ENCODE measurements at regions of chr19 and their contacts with region 1.

Region 1: DNA sequence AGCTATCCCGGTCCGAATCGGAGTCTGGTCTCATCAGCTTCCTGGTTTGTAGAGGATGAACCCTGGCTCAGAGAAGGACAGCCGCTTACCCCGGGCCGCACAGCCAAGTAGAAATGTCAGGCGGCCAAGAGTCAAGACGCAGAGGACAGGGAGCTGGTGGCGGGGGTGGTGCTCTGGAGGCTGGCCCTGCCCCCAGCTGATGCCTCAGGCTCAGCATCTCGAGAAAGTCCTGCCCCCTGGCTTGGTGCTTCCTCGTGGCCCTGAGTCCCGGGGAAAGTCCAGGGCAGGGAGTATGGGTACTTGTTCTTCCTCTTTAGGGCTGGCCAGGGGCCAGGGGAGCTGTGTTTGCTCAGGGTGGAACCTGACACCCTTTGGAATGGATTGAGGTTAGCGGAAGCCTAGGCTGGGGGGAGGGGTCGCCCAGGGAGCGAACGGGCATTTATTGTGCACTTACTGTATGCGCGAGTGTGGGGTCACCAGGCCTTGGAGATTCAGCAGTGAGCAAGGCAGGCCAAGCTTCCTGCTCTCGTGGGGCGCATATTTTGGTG is 2.2 kb downstream of the TJP3 start:
- DNase-seq: no peak
- H3K4me3 Mint-ChIP-seq: no peak overlapping the region
- H3K27ac Mint-ChIP-seq: no peak overlapping the region
- H3K4me1 Mint-ChIP-seq: no peaks in the 10 kb centered on the region
- H3K27me3 Mint-ChIP-seq: peaks cover 10% of the 10 kb centered on the region

Region 2: GRCh38 chr19:3544742-3545668 is 165.3 kb before region 1 on chr19:
- intact Hi-C with region 1: loop called (anchors 2 kb)
- DNase-seq: peak; percentile 66
- H3K4me3 Mint-ChIP-seq: no peak overlapping the region
- H3K27ac Mint-ChIP-seq: peak overlapping the region; percentile 26
- H3K4me1 Mint-ChIP-seq: peaks cover 2% of the 10 kb centered on the region
- H3K27me3 Mint-ChIP-seq: no peaks in the 10 kb centered on the region

Region 3: DNA sequence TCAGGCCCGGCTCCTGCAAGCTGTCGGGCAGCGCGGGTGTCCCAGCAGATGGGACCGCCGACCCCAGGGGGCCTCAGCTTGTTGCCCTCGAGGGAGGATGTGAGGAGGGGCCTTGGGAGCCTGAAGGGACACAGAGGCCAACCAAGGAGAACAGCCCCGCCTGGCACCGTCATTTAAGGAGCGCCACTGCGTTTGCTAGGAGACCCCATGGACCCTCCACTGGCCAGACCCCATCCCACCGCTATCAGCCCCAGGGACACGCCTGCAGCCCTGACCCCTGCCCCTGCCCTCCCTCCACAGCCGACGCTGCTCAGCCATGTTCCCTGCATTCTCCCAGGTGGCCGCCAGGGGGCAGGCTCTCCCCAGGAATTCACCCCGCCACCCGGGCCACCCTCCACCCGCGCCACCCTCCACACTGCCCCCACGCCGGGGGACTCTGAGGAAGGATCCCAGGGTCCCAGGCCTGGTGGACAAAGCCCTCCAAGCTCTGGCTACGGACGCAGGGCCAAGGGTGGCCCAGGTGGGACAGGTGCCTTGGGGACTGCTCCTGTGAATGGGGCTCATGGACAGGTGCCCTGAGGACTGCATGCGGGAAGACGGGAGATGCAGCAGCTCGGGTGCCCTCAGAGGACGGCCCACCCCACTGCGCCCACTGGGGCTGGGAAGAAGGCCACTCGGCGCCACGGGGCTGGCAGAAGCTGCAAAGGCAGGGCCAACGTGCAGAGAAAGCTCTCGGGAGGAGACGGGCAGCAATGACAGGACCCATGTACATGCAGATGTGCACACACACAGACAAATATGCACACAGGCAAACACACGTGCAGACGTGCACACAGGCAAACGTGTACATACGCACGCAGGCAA is 44.4 kb before region 1 on chr19:
- intact Hi-C with region 1: loop called (anchors 1 kb)
- DNase-seq: peak; percentile 63
- H3K4me3 Mint-ChIP-seq: no peak overlapping the region
- H3K27ac Mint-ChIP-seq: no peak overlapping the region
- H3K4me1 Mint-ChIP-seq: peaks cover 2% of the 10 kb centered on the region
- H3K27me3 Mint-ChIP-seq: no peaks in the 10 kb centered on the region

Region 4: DNA sequence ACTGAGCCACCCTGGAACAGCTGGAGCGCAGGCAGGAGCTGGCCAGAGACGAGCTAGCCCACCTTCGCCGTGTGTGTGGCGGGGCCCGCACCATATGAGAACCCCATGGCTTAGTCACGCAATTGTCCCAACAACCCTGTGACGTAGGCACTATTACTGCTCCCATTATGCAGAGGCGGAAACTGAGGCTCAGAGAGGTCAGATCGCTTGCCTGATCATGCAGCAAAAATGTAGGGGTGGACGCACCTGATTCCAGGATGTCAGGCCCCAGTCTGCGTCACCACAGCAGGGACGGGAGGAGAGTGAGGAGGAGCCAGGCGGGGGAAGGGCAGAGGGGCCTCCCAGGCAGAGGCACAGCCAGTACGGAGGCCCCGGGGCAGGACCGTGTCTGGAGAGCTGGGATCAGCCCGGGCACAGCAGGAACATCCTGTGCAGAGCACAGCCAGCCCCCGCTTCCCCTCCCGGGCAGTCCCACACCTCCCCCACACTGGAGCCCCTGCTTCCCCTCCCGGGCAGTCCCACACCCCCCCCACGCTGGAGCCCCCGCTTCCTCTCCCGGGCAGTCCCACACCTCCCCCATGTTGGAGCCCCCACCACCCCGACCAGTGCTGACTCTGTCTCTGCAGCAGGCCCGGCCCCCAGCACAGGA is 26.8 kb before region 1 on chr19:
- intact Hi-C with region 1: no loop called
- DNase-seq: no peak
- H3K4me3 Mint-ChIP-seq: no peak overlapping the region
- H3K27ac Mint-ChIP-seq: no peak overlapping the region
- H3K4me1 Mint-ChIP-seq: peaks cover 7% of the 10 kb centered on the region
- H3K27me3 Mint-ChIP-seq: no peaks in the 10 kb centered on the region

Region 5: DNA sequence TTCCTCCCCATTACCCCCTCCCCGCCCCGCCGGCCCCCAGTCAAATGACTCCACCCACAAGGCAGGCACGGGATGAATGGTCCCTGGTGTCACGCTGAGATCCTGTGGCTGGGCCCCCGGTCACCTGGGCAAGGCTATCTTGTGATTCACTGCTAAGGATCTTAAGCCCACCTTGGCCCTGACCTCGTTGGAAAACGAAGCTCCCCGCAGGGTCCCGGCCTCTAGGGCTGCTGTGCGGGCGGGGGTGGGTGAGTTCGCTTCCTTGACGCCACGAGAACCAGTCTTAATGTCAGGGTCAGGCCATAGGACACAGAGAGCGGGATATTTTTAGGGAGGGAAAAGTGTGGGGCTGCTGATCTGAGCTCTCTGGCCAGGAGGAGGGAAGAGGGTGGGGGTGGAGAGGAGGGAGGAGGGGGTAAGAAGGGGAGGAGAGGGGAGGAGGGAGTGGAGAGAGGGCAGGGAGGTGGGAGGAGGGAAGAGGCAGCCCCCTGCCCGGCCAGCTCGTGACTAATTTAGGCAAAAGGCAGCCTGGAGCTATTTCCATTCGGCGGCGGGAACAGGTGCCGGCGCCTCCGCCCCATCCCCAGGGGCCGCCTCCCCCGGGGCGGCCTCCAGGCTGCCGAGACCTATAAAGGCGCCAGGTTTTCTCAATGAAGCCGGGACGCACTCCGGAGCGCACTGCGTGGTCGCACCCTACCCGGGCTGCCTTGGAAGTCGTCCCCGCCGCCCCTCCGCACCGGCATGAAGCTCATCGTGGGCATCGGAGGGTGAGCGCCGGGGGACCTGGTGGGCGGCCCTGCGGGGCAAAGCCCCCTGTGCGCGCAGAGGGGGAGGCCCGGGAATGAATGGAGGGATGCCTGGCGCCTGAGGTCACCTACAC is 222.8 kb after region 1 on chr19 and contains the start of gene NMRK2:
- intact Hi-C with region 1: no loop called
- DNase-seq: no peak
- H3K4me3 Mint-ChIP-seq: no peak within 1 kb of the TSS
- H3K27ac Mint-ChIP-seq: no peak within 1 kb of the TSS
- H3K4me1 Mint-ChIP-seq: no peaks in the 10 kb centered on the region
- H3K27me3 Mint-ChIP-seq: peaks cover 11% of the 10 kb centered on the region
- total RNA-seq, gene NMRK2: not detected in 2 replicates

Measured in activated T-helper 2 cell treated with anti-CD3 and anti-CD28 coated beads, Interferon-gamma antibody, Interleukin-2, Interleukin-4, amounts not matched to agents 10 μg/mL and 5 μg/mL and 100 μg/mL, durations not matched to agents 14 hours and 24 hours and 36 hours (primary cell).